Right ventricle myocardium inferior (tissue), 1 donor: ENCODE measurements at regions of chr15 and their contacts with region 1.

Region 1: GRCh38 chr15:49421991-49422390 is 1.1 kb upstream of the FGF7 start:
- DNase-seq: peak; percentile 82
- ATAC-seq: peak; percentile 68

Region 2: GRCh38 chr15:49155110-49155833 is 266.7 kb before region 1 on chr15 and contains the start of gene COPS2:
- intact Hi-C with region 1: loop called (anchors 10 kb)
- DNase-seq: peak; percentile 91
- ATAC-seq: peak; percentile 99
- total RNA-seq, gene COPS2: 77.0 TPM